Naive thymus-derived CD4-positive, alpha-beta T cell (primary cell): ENCODE measurements at regions of chr1 and their contacts with region 1.

Region 1: GRCh38 chr1:32335790-32336590 is at the start of gene MARCKSL1:
- DNase-seq: peak; percentile 81 to 90 (median 87)
- ATAC-seq: peak; percentile 64
- H3K4me3 ChIP-seq: peak within 1 kb of the TSS; percentile 60
- H3K4me3 Mint-ChIP-seq: peak within 1 kb of the TSS; percentile 82 to 93 (median 90)
- H3K27ac ChIP-seq: peak within 1 kb of the TSS; percentile 70
- H3K27ac Mint-ChIP-seq: peak within 1 kb of the TSS; percentile 74 to 95 (median 89)
- H3K4me1 ChIP-seq: peaks cover 20 to 33% of the 10 kb centered on the region in 2 donors
- H3K4me1 Mint-ChIP-seq: peaks cover 38 to 52% (median 43%) of the 10 kb centered on the region in 7 donors
- H3K27me3 ChIP-seq: no peaks in the 10 kb centered on the region
- H3K27me3 Mint-ChIP-seq: peaks cover 0 to 1% (median 0%) of the 10 kb centered on the region in 5 donors
- total RNA-seq, gene MARCKSL1: 22.2 to 70.2 (median 41.7) TPM

Region 2: GRCh38 chr1:32179443-32180185 is 156.4 kb before region 1 on chr1 and contains the start of gene TXLNA:
- CTCF ChIA-PET with region 1: no interaction called
- POLR2A ChIA-PET with region 1: interaction called, 14 read pairs
- intact Hi-C with region 1: loop called in 1 of 2 experiments (anchors 1 kb)
- DNase-seq: peak; percentile 80 to 93 (median 86)
- ATAC-seq: peak; percentile 91
- H3K4me3 ChIP-seq: peak within 1 kb of the TSS; percentile 89
- H3K4me3 Mint-ChIP-seq: peak within 1 kb of the TSS; percentile 86 to 94 (median 91)
- H3K27ac ChIP-seq: peak within 1 kb of the TSS; percentile 89
- H3K27ac Mint-ChIP-seq: peak within 1 kb of the TSS; percentile 84 to 98 (median 92)
- H3K4me1 ChIP-seq: peaks cover 17 to 21% of the 10 kb centered on the region in 2 donors
- H3K4me1 Mint-ChIP-seq: peaks cover 22 to 45% (median 38%) of the 10 kb centered on the region in 7 donors
- H3K27me3 ChIP-seq: no peaks in the 10 kb centered on the region
- H3K27me3 Mint-ChIP-seq: no peaks in the 10 kb centered on the region
- total RNA-seq, gene TXLNA: 16.7 to 83.3 (median 36.3) TPM

Region 3: DNA sequence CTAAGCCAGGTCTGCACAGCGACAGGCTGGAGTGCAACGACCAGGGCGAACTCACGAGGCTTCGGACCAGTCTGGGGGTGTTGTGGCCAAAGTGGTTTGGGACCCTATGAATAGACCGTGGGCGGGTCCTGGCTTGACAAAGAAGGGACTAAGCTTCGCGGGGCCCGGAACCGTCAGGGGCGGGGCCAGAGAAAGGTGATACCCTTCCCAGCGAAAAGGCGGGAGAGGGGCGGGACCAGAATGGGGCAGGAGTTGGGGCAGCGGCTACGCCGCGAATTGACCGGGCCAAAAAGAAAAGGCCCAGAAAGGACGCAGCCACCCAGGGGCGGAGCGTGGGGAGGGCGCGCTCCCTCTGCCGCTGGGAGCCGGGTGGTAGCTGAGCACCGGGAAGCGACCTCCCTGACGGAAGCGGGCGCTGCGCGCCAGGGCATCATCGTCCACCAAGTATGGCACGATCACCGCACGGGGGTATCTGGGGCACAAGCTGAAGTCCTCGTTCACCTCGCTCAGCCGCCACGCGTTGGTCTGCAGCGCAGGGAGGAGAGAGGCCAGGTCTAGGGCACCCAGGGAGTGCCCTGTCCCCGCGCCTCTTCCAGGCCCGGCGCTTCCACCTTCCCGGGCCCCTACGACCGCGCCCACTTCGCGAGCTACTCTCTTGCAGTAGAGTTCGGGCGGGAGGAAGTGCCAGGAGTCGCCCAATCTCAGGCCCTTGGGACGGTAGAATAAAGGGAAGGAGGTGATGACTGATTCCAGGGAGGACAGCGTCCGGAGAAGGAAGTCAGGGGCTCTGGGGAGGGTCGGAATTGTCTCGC is 95.6 kb before region 1 on chr1:
- CTCF ChIA-PET with region 1: interaction called, 13 read pairs
- POLR2A ChIA-PET with region 1: interaction called, 64 read pairs
- intact Hi-C with region 1: loop called in 1 of 2 experiments (anchors 1 kb)
- DNase-seq: peak in 7 of 9 donors; percentile 33 to 73 (median 57)
- ATAC-seq: peak; percentile 78
- H3K4me3 ChIP-seq: peak overlapping the region; percentile 94
- H3K4me3 Mint-ChIP-seq: peak overlapping the region; percentile 87 to 93 (median 91)
- H3K27ac ChIP-seq: peak overlapping the region; percentile 68
- H3K27ac Mint-ChIP-seq: peak overlapping the region in 8 of 9 donors; percentile 40 to 92 (median 83)
- H3K4me1 ChIP-seq: peaks cover 8 to 17% of the 10 kb centered on the region in 2 donors
- H3K4me1 Mint-ChIP-seq: peaks cover 6 to 31% (median 22%) of the 10 kb centered on the region in 7 donors
- H3K27me3 ChIP-seq: no peaks in the 10 kb centered on the region
- H3K27me3 Mint-ChIP-seq: no peaks in the 10 kb centered on the region

Region 4: DNA sequence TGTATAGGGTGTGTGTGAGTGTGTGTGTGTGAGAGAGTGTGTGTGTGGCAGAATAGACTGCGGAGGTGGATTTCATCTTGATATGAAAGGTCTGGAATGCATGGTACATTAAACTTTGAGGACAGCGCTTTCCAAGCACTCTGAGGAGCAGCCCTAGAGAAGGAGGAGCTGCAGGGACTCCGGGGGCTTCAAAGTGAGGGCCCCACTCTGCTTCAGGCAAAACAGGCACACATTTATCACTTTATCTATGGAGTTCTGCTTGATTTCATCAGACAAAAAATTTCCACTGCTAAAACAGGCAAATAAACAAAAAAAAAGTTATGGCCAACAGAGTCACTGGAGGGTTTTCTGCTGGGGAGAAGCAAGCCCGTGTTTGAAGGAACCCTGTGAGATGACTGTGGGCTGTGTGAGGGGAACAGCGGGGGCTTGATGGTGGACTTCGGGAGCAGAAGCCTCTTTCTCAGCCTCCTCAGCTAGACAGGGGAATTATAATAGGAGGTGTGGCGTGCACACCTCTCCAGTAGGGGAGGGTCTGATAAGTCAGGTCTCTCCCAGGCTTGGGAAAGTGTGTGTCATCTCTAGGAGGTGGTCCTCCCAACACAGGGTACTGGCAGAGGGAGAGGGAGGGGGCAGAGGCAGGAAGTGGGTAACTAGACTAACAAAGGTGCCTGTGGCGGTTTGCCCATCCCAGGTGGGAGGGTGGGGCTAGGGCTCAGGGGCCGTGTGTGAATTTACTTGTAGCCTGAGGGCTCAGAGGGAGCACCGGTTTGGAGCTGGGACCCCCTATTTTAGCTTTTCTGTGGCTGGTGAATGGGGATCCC is 62.4 kb before region 1 on chr1:
- CTCF ChIA-PET with region 1: no interaction called
- POLR2A ChIA-PET with region 1: interaction called, 5 read pairs
- intact Hi-C with region 1: loop called in 1 of 2 experiments (anchors 1 kb)
- DNase-seq: peak; percentile 34 to 96 (median 88)
- ATAC-seq: peak; percentile 94
- H3K4me3 ChIP-seq: peak overlapping the region; percentile 49
- H3K4me3 Mint-ChIP-seq: peak overlapping the region; percentile 74 to 91 (median 88)
- H3K27ac ChIP-seq: peak overlapping the region; percentile 79
- H3K27ac Mint-ChIP-seq: peak overlapping the region; percentile 77 to 99 (median 97)
- H3K4me1 ChIP-seq: peaks cover 42 to 69% of the 10 kb centered on the region in 2 donors
- H3K4me1 Mint-ChIP-seq: peaks cover 45 to 86% (median 62%) of the 10 kb centered on the region in 7 donors
- H3K27me3 ChIP-seq: no peaks in the 10 kb centered on the region
- H3K27me3 Mint-ChIP-seq: no peaks in the 10 kb centered on the region

Region 5: DNA sequence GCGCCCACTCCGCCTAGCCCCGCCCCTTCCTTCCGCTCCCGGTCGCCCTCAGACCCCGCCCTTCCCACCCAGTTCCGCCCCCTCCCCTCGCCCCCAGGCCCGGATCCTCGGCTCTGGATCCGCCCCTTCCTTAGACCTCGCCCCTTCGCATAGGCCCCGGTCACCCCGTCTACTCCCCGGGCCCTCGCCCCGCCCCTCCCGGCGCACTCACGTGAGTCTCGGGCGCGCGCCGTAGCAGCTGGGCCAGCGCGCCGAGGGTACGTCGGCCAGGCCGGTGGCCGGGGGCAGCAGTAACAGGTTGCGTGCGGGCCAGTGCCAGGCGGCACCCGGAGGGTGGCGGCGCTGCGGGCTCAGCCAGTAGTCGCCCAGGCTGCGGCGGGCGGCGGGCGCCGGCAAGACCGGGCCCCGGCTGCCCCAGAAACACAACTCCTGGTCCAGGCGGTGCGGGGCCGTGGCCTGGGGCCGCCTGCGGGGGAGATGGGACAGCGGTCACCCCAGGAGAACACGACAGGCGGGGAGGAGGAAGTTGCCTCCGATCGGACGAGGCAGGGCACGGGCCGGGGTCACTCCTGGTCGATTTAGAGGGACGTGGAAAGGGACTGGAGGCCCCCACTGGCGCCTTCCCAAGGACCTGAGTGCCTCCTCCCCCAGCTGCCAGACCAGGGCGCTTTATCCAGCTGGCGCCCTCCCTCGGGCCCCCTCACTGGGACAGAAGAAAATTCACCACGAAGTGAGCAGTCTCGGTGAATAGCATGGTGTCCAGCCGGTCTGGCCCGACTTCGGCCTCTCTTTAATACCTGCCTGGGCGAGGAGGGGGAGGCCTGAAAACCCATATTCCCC is 15.6 kb after region 1 on chr1:
- CTCF ChIA-PET with region 1: interaction called, 5 read pairs
- POLR2A ChIA-PET with region 1: interaction called, 55 read pairs
- intact Hi-C with region 1: loop called (anchors 1 kb)
- DNase-seq: peak; percentile 83 to 93 (median 92)
- ATAC-seq: peak; percentile 97
- H3K4me3 ChIP-seq: peak overlapping the region; percentile 62
- H3K4me3 Mint-ChIP-seq: peak overlapping the region; percentile 68 to 90 (median 85)
- H3K27ac ChIP-seq: peak overlapping the region; percentile 75
- H3K27ac Mint-ChIP-seq: peak overlapping the region; percentile 63 to 96 (median 91)
- H3K4me1 ChIP-seq: peaks cover 4 to 19% of the 10 kb centered on the region in 2 donors
- H3K4me1 Mint-ChIP-seq: peaks cover 35 to 65% (median 53%) of the 10 kb centered on the region in 7 donors
- H3K27me3 ChIP-seq: no peaks in the 10 kb centered on the region
- H3K27me3 Mint-ChIP-seq: peaks cover 0 to under 1% (median 0%) of the 10 kb centered on the region in 5 donors

Region 6: DNA sequence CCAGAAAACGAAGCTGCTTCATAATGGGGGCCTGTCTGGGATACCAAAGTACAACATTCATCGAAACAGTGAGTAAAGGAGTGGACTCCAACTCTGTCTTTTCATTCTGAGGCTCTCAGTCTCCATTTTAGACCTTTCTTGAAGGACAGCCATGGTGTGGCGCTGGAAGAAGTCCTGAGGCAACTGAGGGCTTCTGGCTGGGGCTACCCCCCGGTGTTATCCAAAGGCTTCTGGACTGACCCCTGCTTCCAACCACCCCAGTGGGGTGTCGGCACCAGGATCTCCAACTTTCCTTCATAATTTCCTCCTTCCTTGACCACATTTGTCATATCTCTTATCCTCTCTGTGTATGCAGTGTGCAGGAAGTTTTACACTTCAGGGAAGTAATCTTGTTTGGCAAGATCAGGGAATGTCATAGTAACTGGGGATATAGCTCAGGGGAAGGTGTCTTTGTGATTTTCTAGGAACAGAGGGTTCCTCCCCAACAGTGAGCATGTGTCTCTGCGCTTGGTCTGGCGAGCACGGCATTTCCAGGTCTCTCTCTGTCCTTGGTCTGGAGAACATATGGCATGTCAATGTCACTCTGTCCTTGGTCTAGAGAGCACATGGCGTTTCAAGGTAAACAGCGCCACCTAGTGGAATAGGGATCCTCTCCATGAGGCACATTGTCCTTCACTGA is 77.7 kb after region 1 on chr1:
- CTCF ChIA-PET with region 1: no interaction called
- POLR2A ChIA-PET with region 1: no interaction called
- intact Hi-C with region 1: loop called (anchors 1 kb)
- DNase-seq: peak; percentile 27 to 78 (median 70)
- ATAC-seq: peak; percentile 90
- H3K4me3 ChIP-seq: no peak overlapping the region
- H3K4me3 Mint-ChIP-seq: no peak overlapping the region
- H3K27ac ChIP-seq: no peak overlapping the region
- H3K27ac Mint-ChIP-seq: peak overlapping the region in 3 of 9 donors; percentile 8 to 26 (median 21)
- H3K4me1 ChIP-seq: no peaks in the 10 kb centered on the region
- H3K4me1 Mint-ChIP-seq: peaks cover 0 to 3% (median 0%) of the 10 kb centered on the region in 7 donors
- H3K27me3 ChIP-seq: peaks cover 0 to 6% of the 10 kb centered on the region in 2 donors
- H3K27me3 Mint-ChIP-seq: peaks cover 4 to 40% (median 8%) of the 10 kb centered on the region in 5 donors